ENCODE measurements at regions of chr4 and their contacts with region 1.

Region 1: DNA sequence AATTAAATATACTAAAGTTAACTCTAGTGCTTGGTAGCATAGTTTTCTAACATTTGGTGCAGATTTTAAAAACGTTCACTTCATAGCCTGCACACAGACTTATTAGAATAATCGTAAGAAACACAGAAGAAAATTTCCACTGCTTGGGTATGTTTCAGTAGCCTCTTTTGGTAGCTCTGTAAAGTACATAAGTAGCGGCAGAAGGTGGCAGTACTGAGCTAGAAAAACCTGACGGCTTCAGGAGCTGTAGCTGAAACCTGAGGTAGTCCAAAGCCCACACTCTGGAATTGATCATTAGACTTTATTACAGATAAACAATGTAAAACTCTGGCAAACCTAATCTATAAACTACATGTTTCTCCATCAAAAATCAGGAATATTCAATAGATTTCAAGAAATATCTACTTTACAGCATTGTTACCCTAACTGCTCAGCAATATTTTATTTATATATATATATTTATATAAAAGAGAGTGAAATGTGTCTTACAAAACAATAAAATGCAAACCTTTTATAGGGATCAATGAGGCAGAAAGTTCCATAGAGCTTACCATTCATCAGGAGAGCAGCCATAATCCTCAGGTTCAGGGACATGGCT is 88.2 kb downstream of the ATP8A1 start:
- DNase-seq: peak; percentile 2
- H3K4me3 ChIP-seq: no peak overlapping the region
- H3K27me3 ChIP-seq: no peaks in the 10 kb centered on the region
- CTCF ChIP-seq: peak; percentile 72

Region 2: DNA sequence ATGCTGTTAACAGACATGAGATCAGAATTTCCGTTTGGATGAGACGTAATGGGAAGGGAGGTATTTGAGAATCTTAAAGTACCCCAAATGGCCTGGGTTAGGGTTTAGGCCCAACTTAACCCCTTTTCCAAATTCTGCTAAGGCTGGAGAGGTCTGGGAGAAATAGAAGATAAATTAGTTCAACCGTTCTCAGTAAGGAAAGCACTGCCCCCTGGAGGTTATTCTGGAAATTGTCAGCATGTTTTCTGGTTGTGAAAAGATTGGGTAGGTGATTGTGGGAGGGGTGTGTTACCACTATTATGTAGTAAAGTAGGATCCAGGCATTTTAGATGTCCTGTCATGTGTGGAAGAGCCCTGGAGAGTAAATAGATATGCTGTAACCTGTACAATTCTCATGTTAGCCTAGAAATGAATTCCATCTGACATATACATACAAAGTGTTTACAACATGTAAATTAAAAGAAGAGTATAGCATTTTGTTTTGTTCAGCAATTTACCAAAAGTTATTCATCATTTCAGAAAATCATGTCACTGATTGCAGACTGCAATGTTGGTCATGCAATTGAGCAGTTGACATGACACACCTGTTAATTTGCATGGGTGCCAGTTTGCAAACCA is 297.0 kb after region 1 on chr4:
- CTCF ChIA-PET with region 1: interaction called, 38 read pairs
- POLR2A ChIA-PET with region 1: no interaction called
- DNase-seq: no peak
- H3K4me3 ChIP-seq: no peak overlapping the region
- H3K27me3 ChIP-seq: no peaks in the 10 kb centered on the region
- CTCF ChIP-seq: peak; percentile 65

Region 3: GRCh38 chr4:43136752-43137151 is 568.0 kb after region 1 on chr4:
- CTCF ChIA-PET with region 1: no interaction called
- POLR2A ChIA-PET with region 1: no interaction called
- DNase-seq: no peak
- H3K4me3 ChIP-seq: no peak overlapping the region
- H3K27me3 ChIP-seq: no peaks in the 10 kb centered on the region
- CTCF ChIP-seq: no peak